Dorsolateral prefrontal cortex (tissue), 120 donors: ENCODE measurements at regions of chr7 and their contacts with region 1.

Region 1: DNA sequence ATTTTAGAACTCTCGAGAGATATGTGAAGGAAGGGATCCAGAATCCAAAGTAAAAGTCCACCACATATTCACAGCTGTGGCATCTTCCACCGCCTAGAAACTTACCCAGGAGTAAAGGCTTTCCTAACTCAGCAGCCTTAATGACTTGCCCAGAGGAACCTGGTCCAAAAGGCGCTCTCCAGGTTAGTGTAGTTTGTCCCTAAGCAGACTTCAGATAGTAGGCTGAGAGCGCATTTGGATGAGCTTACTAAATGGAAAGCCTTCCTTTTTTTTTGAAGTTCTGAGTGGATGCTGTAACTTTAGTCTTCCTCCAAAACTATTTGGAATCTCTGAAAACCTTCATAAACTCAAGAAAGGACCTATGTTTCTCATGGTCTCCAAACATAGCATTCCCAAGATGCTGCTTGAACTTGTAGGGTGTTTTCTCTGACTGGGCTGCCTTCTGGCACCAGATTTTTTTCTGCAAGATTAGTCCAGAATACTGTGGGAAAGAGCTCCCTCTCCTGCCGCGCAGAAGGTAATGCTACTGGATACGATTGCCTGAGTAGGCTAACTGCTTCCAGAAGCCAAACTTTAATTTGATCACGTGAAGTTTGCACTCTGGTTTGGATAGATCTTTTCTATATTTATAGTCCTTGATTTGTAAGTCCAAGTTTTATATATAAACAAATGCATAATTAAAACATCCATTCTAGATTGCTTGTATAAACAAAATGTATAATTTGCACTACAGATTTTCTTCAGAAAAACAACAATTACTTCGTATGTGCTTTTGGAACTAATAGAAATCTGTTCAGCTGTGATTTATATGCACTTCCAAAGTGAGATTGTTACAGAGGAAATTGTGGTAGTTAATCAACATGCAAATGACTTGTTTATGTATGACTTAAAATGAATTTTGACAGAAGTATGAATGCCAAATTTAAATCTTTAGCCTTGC is 19.6 kb upstream of the GPR37 start:
- DNase-seq: peak in 9 of 10 donors; percentile 48 to 64 (median 63)
- H3K4me3 ChIP-seq: peak overlapping the region in 3 of 59 donors; percentile 8 to 15 (median 10)
- H3K27ac ChIP-seq: no peak overlapping the region
- H3K27me3 ChIP-seq: no peaks in the 10 kb centered on the region
- CTCF ChIP-seq: peak; percentile 59 to 99 (median 88)

Region 2: DNA sequence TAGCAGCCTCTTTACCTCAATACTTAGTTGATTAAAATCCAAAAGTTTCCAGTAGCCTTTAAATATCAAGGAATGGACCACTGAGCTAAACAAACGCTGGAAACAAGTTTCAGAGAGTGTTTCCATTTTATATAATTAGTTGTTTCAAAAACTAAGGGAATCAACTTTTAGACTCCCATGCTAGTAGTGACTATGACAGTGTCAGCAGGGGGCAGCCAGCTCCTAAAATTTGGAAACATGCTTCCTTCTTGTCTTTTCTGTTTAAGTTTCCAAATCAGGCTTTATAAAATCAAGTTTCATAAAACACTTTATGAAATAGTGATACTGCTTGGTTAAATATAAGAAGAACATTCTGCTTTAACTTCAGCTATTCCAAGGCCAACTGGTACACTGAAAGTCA is 614.1 kb before region 1 on chr7:
- intact Hi-C with region 1: loop called (anchors 5 kb)
- DNase-seq: peak in 9 of 10 donors; percentile 31 to 77 (median 55)
- H3K4me3 ChIP-seq: no peak overlapping the region
- H3K27ac ChIP-seq: peak overlapping the region in 1 of 59 donors; percentile 22
- H3K27me3 ChIP-seq: no peaks in the 10 kb centered on the region
- CTCF ChIP-seq: peak in 55 of 56 donors; percentile 19 to 89 (median 64)

Region 3: GRCh38 chr7:124813994-124814798 is 29.0 kb after region 1 on chr7:
- intact Hi-C with region 1: no loop called
- DNase-seq: no peak
- H3K4me3 ChIP-seq: no peak overlapping the region
- H3K27ac ChIP-seq: no peak overlapping the region
- H3K27me3 ChIP-seq: peaks cover 0 to 15% (median 0%) of the 10 kb centered on the region in 45 donors
- CTCF ChIP-seq: no peak

Region 4: DNA sequence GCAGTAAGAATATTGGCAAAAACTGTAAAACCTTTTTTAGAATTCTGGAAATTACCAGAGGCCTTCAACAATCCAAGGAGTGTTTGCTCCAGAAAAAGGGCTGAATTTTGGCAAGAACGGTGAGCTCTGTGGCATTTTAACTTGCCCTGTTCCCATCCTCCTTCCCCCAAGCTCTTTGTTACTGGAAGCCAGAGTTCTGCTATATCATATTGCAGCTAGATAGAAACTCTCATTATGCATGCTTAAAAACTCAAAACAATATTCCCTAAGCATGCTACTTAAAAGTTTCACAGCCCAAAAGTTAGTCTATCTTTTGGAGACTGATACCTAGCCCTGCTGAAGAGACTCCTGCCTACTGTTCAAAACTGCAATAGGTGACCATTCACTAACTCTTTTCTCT is 51.0 kb after region 1 on chr7:
- intact Hi-C with region 1: loop called in 1 of 2 experiments (anchors 5 kb)
- DNase-seq: no peak
- H3K4me3 ChIP-seq: no peak overlapping the region
- H3K27ac ChIP-seq: no peak overlapping the region
- H3K27me3 ChIP-seq: no peaks in the 10 kb centered on the region
- CTCF ChIP-seq: no peak